ENCODE measurements at regions of chr2 and their contacts with region 1.

Region 1: DNA sequence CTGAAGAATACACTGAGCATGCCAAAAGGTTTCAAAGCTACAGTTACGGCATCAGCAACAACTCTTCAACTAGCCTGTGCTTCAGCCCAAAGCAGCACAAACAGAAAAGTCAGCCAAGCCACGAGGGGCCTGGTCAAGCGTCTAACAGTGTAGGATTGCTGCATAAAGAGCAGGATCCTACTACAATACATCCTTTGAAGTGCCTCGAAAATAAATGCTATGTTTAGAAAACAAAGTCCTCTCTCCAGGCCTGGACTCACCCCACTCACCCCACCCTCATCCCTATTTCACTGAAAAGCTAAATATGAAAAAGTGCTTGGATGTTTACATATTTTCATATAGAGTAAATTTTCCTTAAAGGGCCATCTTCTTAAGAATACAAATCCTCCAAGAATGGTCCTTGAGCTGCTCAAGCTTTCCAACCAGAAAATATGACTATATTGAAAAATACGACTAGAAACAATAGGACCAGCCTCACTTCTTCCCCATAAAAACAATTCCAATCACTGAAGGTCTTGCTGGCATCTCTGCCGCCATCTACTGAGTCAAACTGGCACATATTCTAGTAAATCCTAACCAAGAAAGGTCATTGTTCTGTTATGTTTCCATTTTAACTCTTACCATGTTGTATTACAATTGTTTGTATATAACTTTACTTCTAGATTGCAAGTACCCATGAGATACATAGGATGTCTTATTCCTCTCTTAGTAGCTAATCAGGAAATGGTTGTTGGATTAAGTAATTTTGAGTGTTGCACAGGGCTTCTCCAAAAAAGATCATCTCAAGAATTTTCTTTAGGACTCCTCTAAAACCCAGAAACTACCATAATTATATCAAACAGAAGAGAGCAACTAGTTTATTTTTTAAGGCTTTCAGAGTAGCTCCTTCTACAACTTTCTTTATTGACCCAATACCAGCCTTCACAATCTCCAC is 63.6 kb downstream of the CLHC1 start:
- DNase-seq: peak; percentile 50
- ATAC-seq: no peak
- H3K4me3 Mint-ChIP-seq: no peak overlapping the region
- H3K27ac Mint-ChIP-seq: no peak overlapping the region
- H3K4me1 Mint-ChIP-seq: no peaks in the 10 kb centered on the region
- H3K27me3 Mint-ChIP-seq: no peaks in the 10 kb centered on the region

Region 2: GRCh38 chr2:55010149-55010591 is 158.3 kb before region 1 on chr2:
- CTCF ChIA-PET with region 1: interaction called, 43 read pairs
- POLR2A ChIA-PET with region 1: no interaction called
- DNase-seq: peak; percentile 66
- ATAC-seq: peak; percentile 98
- H3K4me3 Mint-ChIP-seq: peak overlapping the region; percentile 84
- H3K27ac Mint-ChIP-seq: peak overlapping the region; percentile 90
- H3K4me1 Mint-ChIP-seq: peaks cover 56% of the 10 kb centered on the region
- H3K27me3 Mint-ChIP-seq: no peaks in the 10 kb centered on the region

Region 3: DNA sequence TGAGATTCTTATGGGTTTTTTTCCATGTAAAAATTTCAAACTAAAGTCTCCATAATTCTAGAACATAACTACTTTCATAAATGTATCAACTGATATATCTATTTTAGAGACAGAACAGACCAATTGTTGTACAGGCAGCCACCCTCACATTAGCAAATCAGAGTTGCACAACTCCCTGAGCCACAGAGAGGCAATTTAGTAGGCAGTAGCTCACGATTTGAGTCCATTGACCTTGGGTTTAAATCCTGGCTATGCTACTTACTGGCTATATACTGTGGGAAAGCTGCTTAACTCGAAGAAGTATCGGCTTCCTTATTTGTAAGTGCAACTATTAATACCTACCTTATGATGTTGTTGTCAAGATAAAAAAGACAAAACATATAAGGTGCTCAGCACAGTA is 84.3 kb after region 1 on chr2:
- CTCF ChIA-PET with region 1: no interaction called
- POLR2A ChIA-PET with region 1: no interaction called
- DNase-seq: no peak
- ATAC-seq: no peak
- H3K4me3 Mint-ChIP-seq: no peak overlapping the region
- H3K27ac Mint-ChIP-seq: no peak overlapping the region
- H3K4me1 Mint-ChIP-seq: no peaks in the 10 kb centered on the region
- H3K27me3 Mint-ChIP-seq: no peaks in the 10 kb centered on the region

Measured in activated CD8-positive, alpha-beta T cell treated with anti-CD3 and anti-CD28 coated beads, Interleukin-2, amount 10 ng/mL, durations not matched to agents 7 days and 5 days (primary cell).